ENCODE measurements at regions of chr19 and their contacts with region 1.

Region 1: DNA sequence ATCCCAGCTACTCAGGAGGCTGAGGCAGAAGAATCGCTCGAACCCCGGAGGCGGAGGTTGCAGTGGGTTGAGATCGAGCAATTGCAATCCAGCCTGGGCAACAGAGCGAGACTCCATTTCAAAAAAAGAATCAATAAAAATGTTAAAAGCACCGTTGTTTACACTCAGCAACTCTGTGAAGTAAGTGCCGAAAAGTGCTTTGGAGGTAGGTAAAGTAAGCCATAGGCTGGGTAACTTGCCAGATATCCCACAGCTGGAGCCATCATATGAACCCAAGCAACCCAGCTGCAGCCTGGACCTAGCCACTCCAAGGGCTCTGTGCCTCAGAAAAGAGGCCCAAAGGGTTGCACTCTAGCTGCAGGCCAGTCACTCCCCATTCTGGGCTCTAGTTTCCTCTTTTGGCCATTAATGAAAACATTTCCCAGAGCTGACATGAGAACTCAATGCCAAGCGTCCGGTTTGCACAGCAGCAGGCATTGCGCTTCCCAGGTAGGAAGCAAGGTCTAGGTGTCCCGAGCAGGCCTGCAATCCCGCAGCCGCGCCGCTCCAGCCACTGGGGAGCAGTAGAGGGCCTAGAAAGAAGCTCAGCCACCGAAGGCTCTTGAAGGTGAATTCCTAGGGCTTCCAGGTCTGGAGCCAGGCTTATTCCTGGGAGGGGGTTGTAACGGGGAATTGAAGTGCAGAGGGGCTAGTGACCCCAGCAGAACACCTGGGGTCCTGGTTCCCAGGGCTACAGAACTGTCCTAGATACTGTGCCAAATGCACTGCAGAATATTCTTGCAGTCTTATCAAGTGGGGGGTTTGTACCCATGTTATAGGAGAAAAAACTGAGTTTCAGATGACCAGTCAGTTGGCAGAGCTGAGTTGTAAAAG is 4.1 kb upstream of the CD79A start:
- DNase-seq: peak; percentile 39 to 95 (median 70)

Region 2: DNA sequence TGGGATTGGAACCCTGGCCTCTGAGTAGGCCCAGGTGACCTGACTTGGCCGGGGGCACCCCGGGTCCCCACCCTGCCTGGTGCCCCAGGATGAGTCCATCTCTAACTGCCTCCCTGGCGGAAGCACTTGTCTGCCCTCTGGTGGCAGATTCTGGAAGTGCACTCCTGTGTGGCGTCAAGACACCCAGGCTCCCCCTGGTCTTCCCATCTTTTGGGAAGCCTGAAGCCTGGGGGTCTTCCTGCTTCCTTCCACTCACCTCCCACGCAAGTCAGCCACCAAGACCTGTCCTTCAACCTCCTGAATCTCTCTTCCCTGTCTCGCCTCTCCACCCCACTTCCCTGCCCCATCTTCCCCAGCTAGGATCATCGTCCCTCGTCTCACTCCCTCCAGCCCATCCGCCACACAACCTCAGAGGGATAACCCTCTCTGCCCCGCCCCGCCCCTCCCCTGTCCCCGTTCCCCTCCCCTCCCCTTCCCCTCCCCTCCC is 78.7 kb after region 1 on chr19:
- intact Hi-C with region 1: loop called (anchors 1 kb)
- DNase-seq: peak; percentile 60 to 96 (median 86)